ENCODE measurements at regions of chr12 and their contacts with region 1.

Region 1: DNA sequence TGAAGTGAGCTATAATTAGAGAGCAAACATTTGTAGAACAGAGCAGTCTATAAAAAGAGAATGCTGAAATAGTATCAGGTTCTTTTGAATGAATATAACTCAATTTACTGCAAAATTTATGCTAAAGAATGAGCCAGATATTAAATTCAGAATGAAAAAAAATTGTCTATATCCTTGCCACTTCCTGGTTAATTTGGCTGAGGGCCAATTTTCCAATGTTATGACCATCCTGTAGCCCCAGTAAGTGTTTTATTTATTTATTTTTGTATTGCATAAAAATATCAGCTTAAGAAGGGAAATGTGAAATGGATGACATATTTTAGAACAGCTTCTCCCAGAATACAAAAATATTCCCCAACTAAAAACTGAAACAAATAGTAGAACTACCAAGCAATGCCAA is 263.4 kb downstream of the SOX5 start:
- DNase-seq: no peak
- ATAC-seq: no peak
- H3K4me3 ChIP-seq: no peak overlapping the region
- H3K27ac ChIP-seq: no peak overlapping the region
- H3K4me1 ChIP-seq: no peaks in the 10 kb centered on the region
- H3K27me3 ChIP-seq: no peaks in the 10 kb centered on the region
- CTCF ChIP-seq: no peak
- POLR2A ChIP-seq: no peak

Region 2: DNA sequence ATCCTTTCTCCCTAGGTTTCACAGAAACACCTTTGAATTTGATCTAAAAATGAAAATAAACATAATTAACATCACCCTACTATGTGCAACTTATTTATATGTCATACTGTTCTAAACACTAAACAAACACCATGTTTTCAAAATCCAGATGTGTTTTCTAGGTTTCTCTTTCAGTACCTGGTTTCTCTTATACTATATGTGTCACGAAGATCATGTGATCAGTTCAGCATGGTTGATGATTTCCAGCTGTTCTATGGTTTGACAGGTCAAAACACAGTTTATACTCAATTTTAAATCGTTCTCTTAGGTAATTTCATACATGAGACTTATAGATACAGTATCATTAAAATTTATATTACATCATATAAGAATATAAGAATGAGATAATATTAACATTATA is 109.7 kb before region 1 on chr12:
- in situ Hi-C with region 1: loop called in 1 of 4 experiments (anchors 25 kb)
- intact Hi-C with region 1: no loop called
- DNase-seq: no peak
- ATAC-seq: no peak
- H3K4me3 ChIP-seq: no peak overlapping the region
- H3K27ac ChIP-seq: no peak overlapping the region
- H3K4me1 ChIP-seq: no peaks in the 10 kb centered on the region
- H3K27me3 ChIP-seq: no peaks in the 10 kb centered on the region
- CTCF ChIP-seq: no peak
- POLR2A ChIP-seq: no peak

Region 3: GRCh38 chr12:23753628-23754365 is 67.7 kb after region 1 on chr12:
- in situ Hi-C with region 1: no loop called
- intact Hi-C with region 1: no loop called
- DNase-seq: no peak
- ATAC-seq: no peak
- H3K4me3 ChIP-seq: no peak overlapping the region
- H3K27ac ChIP-seq: no peak overlapping the region
- H3K4me1 ChIP-seq: no peaks in the 10 kb centered on the region
- H3K27me3 ChIP-seq: no peaks in the 10 kb centered on the region
- CTCF ChIP-seq: no peak
- POLR2A ChIP-seq: no peak